ENCODE measurements at regions of chr5 and their contacts with region 1.

Region 1: GRCh38 chr5:73519531-73520283 is 21.5 kb downstream of the BTF3 start:
- DNase-seq: peak; percentile 29 to 82 (median 80)
- ATAC-seq: peak; percentile 99
- H3K4me3 ChIP-seq: no peak overlapping the region
- H3K4me3 Mint-ChIP-seq: peak overlapping the region in 8 of 10 donors; percentile 55 to 72 (median 66)
- H3K27ac ChIP-seq: no peak overlapping the region
- H3K27ac Mint-ChIP-seq: peak overlapping the region in 8 of 9 donors; percentile 20 to 86 (median 66)
- H3K4me1 ChIP-seq: no peaks in the 10 kb centered on the region
- H3K4me1 Mint-ChIP-seq: peaks cover 8 to 9% (median 9%) of the 10 kb centered on the region in 7 donors
- H3K27me3 ChIP-seq: no peaks in the 10 kb centered on the region
- H3K27me3 Mint-ChIP-seq: peaks cover 0 to 2% (median 0%) of the 10 kb centered on the region in 5 donors

Region 2: DNA sequence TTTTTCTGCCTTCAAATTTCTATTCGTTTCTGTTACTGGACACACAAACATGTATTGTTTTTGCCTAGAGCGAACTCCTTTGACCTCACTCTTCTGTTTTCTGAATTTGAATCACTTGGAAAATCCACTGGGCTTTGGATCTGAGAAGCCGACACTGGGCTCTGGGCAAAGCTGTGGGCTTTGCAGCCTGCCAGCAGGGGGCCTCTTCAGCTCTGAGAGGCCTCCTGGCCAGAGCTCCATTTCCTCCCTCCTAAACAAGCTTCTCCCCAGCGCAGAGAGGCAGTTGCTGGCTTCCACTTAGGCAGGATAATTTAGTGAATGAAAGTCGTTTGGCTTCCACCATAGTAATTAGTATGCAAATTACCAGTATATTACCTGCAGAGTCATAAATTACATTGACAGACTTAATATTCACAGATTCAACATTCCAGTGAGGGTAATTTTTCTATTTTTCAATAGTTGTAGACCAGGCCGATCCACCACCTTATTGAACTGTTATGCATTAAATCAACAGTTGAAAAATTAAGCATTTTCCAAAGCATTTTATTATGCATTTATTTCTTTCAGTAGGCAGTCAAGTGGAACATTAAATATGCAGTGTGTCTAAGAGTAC is 908.5 kb before region 1 on chr5:
- CTCF ChIA-PET with region 1: no interaction called
- POLR2A ChIA-PET with region 1: no interaction called
- intact Hi-C with region 1: no loop called
- DNase-seq: peak in 8 of 9 donors; percentile 8 to 43 (median 27)
- ATAC-seq: peak; percentile 76
- H3K4me3 ChIP-seq: no peak overlapping the region
- H3K4me3 Mint-ChIP-seq: no peak overlapping the region
- H3K27ac ChIP-seq: no peak overlapping the region
- H3K27ac Mint-ChIP-seq: no peak overlapping the region
- H3K4me1 ChIP-seq: no peaks in the 10 kb centered on the region
- H3K4me1 Mint-ChIP-seq: peaks cover 0 to 7% (median 5%) of the 10 kb centered on the region in 7 donors
- H3K27me3 ChIP-seq: no peaks in the 10 kb centered on the region
- H3K27me3 Mint-ChIP-seq: peaks cover 3 to 23% (median 15%) of the 10 kb centered on the region in 5 donors

Region 3: GRCh38 chr5:73448463-73449136 is 71.1 kb before region 1 on chr5 and contains the start of gene FOXD1:
- CTCF ChIA-PET with region 1: no interaction called
- POLR2A ChIA-PET with region 1: no interaction called
- intact Hi-C with region 1: no loop called
- DNase-seq: peak in 2 of 9 donors; percentile 27 to 30
- ATAC-seq: peak; percentile 49
- H3K4me3 ChIP-seq: peak within 1 kb of the TSS; percentile 39
- H3K4me3 Mint-ChIP-seq: peak within 1 kb of the TSS; percentile 85 to 90 (median 87)
- H3K27ac ChIP-seq: no peak within 1 kb of the TSS
- H3K27ac Mint-ChIP-seq: peak within 1 kb of the TSS in 8 of 9 donors; percentile 33 to 88 (median 69)
- H3K4me1 ChIP-seq: peaks cover 11 to 14% of the 10 kb centered on the region in 2 donors
- H3K4me1 Mint-ChIP-seq: peaks cover 0 to 29% (median 21%) of the 10 kb centered on the region in 7 donors
- H3K27me3 ChIP-seq: peaks cover 66 to 75% of the 10 kb centered on the region in 2 donors
- H3K27me3 Mint-ChIP-seq: peaks cover 70 to 83% (median 74%) of the 10 kb centered on the region in 5 donors
- total RNA-seq, gene FOXD1: 0.16 to 0.32 TPM in 2 of 5 experiments, not detected in the others

Region 4: DNA sequence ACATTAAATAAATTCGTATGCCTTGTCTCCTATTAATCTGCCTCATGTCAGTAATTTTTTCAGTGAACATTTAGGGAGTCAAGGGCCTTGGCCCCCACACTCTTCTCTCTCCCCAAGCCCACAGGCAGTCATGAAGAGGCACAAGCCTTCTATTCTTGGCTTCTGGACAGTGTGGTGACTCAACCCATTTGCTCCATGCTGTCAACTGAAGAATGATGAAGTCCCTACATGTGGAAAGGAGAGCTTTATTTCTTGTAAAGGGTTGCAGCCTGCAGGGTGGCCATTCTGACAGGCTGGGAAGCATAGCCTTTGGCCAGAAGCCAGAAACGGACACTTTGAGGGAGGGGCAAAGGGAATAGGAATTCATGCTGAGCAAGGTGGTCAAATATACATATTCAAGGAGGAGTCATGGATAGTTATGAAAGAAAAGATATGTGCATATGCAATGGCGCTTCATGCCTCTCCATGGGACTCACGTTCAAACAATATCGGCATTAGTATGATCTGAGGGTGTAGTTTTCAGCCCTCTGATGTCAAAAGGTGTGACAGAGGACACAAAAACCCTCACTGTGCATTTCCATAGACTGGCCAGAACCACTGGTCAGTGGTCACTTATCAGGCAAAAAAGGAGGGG is 14.4 kb after region 1 on chr5:
- CTCF ChIA-PET with region 1: interaction called, 38 read pairs
- POLR2A ChIA-PET with region 1: interaction called, 4 read pairs
- intact Hi-C with region 1: loop called (anchors 1 kb)
- DNase-seq: no peak
- ATAC-seq: no peak
- H3K4me3 ChIP-seq: no peak overlapping the region
- H3K4me3 Mint-ChIP-seq: no peak overlapping the region
- H3K27ac ChIP-seq: no peak overlapping the region
- H3K27ac Mint-ChIP-seq: no peak overlapping the region
- H3K4me1 ChIP-seq: no peaks in the 10 kb centered on the region
- H3K4me1 Mint-ChIP-seq: peaks cover 0 to 3% (median 0%) of the 10 kb centered on the region in 7 donors
- H3K27me3 ChIP-seq: no peaks in the 10 kb centered on the region
- H3K27me3 Mint-ChIP-seq: peaks cover 7 to 45% (median 21%) of the 10 kb centered on the region in 5 donors

Region 5: GRCh38 chr5:73558950-73559349 is 39.2 kb after region 1 on chr5:
- CTCF ChIA-PET with region 1: no interaction called
- POLR2A ChIA-PET with region 1: no interaction called
- intact Hi-C with region 1: no loop called
- DNase-seq: no peak
- ATAC-seq: no peak
- H3K4me3 ChIP-seq: no peak overlapping the region
- H3K4me3 Mint-ChIP-seq: no peak overlapping the region
- H3K27ac ChIP-seq: no peak overlapping the region
- H3K27ac Mint-ChIP-seq: no peak overlapping the region
- H3K4me1 ChIP-seq: peaks cover 0 to 5% of the 10 kb centered on the region in 2 donors
- H3K4me1 Mint-ChIP-seq: peaks cover 9 to 30% (median 24%) of the 10 kb centered on the region in 7 donors
- H3K27me3 ChIP-seq: no peaks in the 10 kb centered on the region
- H3K27me3 Mint-ChIP-seq: no peaks in the 10 kb centered on the region

Region 6: DNA sequence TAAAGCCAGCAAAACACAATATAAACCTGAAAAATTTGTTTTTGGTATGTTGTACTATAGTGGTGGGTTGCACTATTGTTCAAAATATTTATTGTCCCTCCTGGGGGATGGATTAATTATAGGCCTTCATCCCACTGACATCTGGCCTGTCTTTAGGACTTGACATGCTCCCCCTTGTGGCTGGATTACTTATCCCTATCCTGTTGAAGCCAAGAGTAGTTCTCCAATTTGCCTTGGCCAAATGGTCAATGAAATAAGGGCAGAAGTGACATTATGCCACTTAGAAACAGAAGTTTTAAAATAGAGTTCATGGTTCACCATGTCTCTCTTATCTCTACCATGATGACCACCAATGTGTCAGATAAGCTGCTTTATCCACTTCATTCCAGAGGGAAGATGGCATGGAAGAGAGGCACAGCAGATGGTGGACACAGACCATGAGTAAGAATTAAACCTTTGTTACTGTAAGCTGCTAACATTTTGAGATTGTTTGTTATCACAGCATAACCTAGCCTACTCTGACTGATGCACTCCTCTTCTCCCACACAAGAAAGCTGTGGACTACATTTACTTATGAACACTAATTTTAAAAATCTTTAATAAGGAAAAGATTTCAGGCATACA is 77.1 kb after region 1 on chr5:
- CTCF ChIA-PET with region 1: no interaction called
- POLR2A ChIA-PET with region 1: no interaction called
- intact Hi-C with region 1: loop called in 1 of 2 experiments (anchors 2 kb)
- DNase-seq: no peak
- ATAC-seq: no peak
- H3K4me3 ChIP-seq: no peak overlapping the region
- H3K4me3 Mint-ChIP-seq: no peak overlapping the region
- H3K27ac ChIP-seq: no peak overlapping the region
- H3K27ac Mint-ChIP-seq: no peak overlapping the region
- H3K4me1 ChIP-seq: no peaks in the 10 kb centered on the region
- H3K4me1 Mint-ChIP-seq: no peaks in the 10 kb centered on the region
- H3K27me3 ChIP-seq: no peaks in the 10 kb centered on the region
- H3K27me3 Mint-ChIP-seq: peaks cover 2 to 24% (median 13%) of the 10 kb centered on the region in 5 donors

Region 7: DNA sequence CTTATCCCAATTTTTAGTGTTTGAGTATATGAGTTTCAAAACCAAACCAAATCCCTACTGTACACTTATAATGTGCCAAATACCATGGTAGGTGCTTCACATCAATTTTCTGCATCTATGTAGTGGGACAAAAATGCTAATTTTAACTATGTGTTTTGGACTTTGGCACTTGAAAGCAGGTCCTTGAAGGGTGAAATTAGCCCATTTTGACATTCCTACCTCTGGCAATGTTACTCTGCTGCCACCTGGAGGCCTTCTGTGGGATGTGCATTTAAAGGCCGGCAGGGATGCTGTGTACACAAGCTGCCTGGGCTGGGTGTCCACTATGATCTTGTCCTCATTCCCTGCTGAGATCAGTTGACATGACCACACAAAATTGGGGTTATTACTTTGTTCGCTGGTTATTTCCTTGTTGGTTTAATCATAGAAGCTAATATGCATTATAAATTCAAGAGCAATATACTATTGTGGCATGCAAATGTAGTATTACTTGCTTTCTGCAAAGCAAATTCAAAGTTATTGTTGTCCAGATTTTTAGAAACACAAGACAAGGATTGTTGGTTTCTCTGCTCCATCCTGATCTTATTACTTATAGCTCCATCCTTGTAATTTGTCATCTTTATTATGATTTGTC is 273.1 kb after region 1 on chr5:
- CTCF ChIA-PET with region 1: interaction called, 3 read pairs
- POLR2A ChIA-PET with region 1: no interaction called
- intact Hi-C with region 1: loop called (anchors 1 kb)
- DNase-seq: peak in 8 of 9 donors; percentile 37 to 62 (median 46)
- ATAC-seq: peak; percentile 83
- H3K4me3 ChIP-seq: no peak overlapping the region
- H3K4me3 Mint-ChIP-seq: no peak overlapping the region
- H3K27ac ChIP-seq: no peak overlapping the region
- H3K27ac Mint-ChIP-seq: no peak overlapping the region
- H3K4me1 ChIP-seq: no peaks in the 10 kb centered on the region
- H3K4me1 Mint-ChIP-seq: peaks cover 0 to 8% (median 3%) of the 10 kb centered on the region in 7 donors
- H3K27me3 ChIP-seq: no peaks in the 10 kb centered on the region
- H3K27me3 Mint-ChIP-seq: peaks cover 10 to 42% (median 31%) of the 10 kb centered on the region in 5 donors